Endothelial cell of umbilical vein (primary cell): ENCODE measurements at regions of chr6 and their contacts with region 1.

Region 1: GRCh38 chr6:31827286-31828079 is at the start of gene HSPA1B:
- DNase-seq: peak; percentile 100
- H3K4me3 ChIP-seq: peak within 1 kb of the TSS in 2 of 3 experiments; percentile 41 to 45
- H3K27ac ChIP-seq: peak within 1 kb of the TSS; percentile 56
- H3K4me1 ChIP-seq: peaks cover 17% of the 10 kb centered on the region
- H3K27me3 ChIP-seq: no peaks in the 10 kb centered on the region
- CTCF ChIP-seq: no peak
- POLR2A ChIP-seq: peak; percentile 99
- total RNA-seq, gene HSPA1B: 49.3 and 54.0 TPM in 2 replicates

Region 2: DNA sequence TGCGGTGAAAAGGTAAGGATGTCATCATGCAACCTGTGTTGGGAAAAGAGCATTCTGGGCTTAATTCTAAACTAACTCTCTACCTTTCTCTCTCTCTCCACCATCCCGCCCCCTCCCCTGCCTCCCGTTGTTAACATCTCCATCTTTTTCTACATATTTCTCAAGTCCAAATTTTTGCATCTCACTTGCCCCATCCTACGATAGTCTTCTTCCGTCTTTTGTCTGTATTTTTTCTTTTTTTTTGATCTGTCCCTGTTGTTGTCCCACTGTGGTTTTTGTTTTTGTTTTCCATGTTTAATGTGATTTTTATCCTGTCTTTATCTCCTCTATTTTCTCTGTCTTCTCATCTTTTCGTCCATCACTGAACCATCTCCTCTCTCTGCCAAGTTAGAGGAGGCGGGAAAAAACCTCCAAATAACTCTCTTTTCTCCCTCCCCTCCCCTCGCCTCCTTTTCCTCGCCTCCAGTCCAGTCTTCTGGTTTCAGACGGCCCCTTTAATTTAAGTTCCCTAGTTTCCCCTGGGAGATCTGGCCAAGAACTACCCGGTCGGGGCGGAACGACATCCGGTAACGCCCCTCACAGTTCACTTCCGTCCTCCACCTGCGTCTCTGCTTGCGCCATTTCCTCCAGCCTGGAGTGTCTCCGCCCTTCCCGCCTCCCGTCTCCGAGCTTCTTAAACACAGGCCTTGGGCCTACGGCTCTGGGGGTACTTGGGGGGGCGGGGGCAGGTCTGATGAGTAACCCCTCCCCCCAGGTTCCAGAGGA is 280.3 kb before region 1 on chr6 and contains the start of gene NFKBIL1:
- CTCF ChIA-PET with region 1: interaction called, 7 read pairs
- POLR2A ChIA-PET with region 1: no interaction called
- dilution Hi-C with region 1: no loop called
- intact Hi-C with region 1: loop called (anchors 2 kb)
- DNase-seq: peak; percentile 94
- H3K4me3 ChIP-seq: peak within 1 kb of the TSS; percentile 31 to 55 (median 34)
- H3K27ac ChIP-seq: peak within 1 kb of the TSS; percentile 87
- H3K4me1 ChIP-seq: peaks cover 20% of the 10 kb centered on the region
- H3K27me3 ChIP-seq: no peaks in the 10 kb centered on the region
- CTCF ChIP-seq: no peak
- POLR2A ChIP-seq: peak; percentile 55
- total RNA-seq, gene NFKBIL1: 14.6 and 15.5 TPM in 2 replicates

Region 3: DNA sequence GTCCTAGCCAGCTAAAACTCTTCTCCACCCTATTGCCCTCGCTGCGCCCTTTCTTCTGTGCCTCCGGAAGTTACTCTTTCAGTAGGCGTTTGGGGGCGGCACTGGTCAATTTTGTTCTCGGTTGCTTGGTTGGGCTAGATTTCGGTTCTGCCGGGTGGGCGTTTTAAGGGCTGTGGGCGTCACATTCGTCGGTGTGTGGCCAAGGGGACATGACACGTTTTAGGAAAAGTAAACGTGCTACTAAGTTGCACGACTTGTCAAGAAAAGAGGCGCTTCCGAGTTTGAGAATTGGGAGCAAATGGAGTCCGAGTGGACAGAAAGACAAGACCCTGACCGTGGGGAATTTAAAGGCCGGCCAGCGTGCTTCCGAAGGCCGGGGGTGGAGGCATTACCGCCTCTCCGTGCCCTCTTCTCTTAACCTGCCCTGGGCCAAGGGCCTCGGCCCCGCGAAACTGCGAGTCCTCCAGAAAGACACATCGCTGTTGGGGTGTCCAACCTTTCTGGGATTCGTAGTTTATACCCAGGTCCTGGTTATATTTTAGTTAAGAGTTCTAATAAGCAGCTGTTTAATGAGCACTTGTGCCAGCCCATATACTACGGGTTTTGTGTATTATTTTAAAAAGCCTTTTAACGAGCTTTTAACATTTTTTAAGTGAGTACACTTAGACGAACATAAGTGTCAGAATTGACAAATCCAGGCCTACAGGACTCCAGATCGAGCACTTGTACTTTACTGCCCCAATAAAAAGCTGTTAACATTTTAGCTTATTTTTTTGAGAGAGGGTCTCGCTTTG is 174.4 kb before region 1 on chr6:
- CTCF ChIA-PET with region 1: interaction called, 14 read pairs
- POLR2A ChIA-PET with region 1: no interaction called
- dilution Hi-C with region 1: no loop called
- intact Hi-C with region 1: loop called (anchors 2 kb)
- DNase-seq: no peak
- H3K4me3 ChIP-seq: peak overlapping the region; percentile 23 to 80 (median 62)
- H3K27ac ChIP-seq: peak overlapping the region; percentile 83
- H3K4me1 ChIP-seq: peaks cover 23% of the 10 kb centered on the region
- H3K27me3 ChIP-seq: no peaks in the 10 kb centered on the region
- CTCF ChIP-seq: no peak
- POLR2A ChIP-seq: no peak

Region 4: DNA sequence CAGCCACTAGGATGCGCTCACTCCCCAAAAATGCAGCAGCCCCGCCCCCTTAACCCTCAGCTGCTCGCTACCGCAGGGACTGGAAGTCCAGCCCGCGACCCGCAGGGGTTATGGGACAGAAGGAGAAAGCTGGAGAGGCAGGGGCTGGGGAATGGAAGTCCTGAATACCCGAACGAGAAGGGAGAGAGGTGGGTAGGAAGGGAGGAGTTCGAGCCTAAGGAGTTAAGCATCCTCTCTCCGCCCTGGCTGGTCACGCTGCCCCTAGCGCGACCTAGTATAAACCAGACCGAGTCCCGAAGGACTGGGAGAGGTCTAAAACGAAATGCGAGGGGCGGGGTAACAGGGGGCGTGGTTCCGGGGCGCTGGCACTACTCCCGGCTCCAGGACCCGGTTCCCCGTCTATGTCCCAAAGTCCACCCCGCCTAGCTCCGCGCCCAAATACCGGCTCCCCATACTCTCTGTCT is 97.9 kb before region 1 on chr6:
- CTCF ChIA-PET with region 1: interaction called, 19 read pairs
- POLR2A ChIA-PET with region 1: interaction called, 14 read pairs
- dilution Hi-C with region 1: no loop called
- intact Hi-C with region 1: loop called (anchors 1 kb)
- DNase-seq: peak; percentile 90
- H3K4me3 ChIP-seq: peak overlapping the region; percentile 66 to 94 (median 70)
- H3K27ac ChIP-seq: peak overlapping the region; percentile 54
- H3K4me1 ChIP-seq: peaks cover 37% of the 10 kb centered on the region
- H3K27me3 ChIP-seq: no peaks in the 10 kb centered on the region
- CTCF ChIP-seq: peak in 1 of 2 donors; percentile 73
- POLR2A ChIP-seq: no peak

Region 5: GRCh38 chr6:31776989-31777666 is 50.4 kb before region 1 on chr6 and contains the start of gene VWA7:
- CTCF ChIA-PET with region 1: interaction called, 71 read pairs
- POLR2A ChIA-PET with region 1: interaction called, 7 read pairs
- dilution Hi-C with region 1: no loop called
- intact Hi-C with region 1: loop called (anchors 1 kb)
- DNase-seq: peak; percentile 35
- H3K4me3 ChIP-seq: no peak within 1 kb of the TSS
- H3K27ac ChIP-seq: no peak within 1 kb of the TSS
- H3K4me1 ChIP-seq: peaks cover 4% of the 10 kb centered on the region
- H3K27me3 ChIP-seq: no peaks in the 10 kb centered on the region
- CTCF ChIP-seq: no peak
- POLR2A ChIP-seq: no peak
- total RNA-seq, gene VWA7: 0.25 and 0.51 TPM in 2 replicates

Region 6: DNA sequence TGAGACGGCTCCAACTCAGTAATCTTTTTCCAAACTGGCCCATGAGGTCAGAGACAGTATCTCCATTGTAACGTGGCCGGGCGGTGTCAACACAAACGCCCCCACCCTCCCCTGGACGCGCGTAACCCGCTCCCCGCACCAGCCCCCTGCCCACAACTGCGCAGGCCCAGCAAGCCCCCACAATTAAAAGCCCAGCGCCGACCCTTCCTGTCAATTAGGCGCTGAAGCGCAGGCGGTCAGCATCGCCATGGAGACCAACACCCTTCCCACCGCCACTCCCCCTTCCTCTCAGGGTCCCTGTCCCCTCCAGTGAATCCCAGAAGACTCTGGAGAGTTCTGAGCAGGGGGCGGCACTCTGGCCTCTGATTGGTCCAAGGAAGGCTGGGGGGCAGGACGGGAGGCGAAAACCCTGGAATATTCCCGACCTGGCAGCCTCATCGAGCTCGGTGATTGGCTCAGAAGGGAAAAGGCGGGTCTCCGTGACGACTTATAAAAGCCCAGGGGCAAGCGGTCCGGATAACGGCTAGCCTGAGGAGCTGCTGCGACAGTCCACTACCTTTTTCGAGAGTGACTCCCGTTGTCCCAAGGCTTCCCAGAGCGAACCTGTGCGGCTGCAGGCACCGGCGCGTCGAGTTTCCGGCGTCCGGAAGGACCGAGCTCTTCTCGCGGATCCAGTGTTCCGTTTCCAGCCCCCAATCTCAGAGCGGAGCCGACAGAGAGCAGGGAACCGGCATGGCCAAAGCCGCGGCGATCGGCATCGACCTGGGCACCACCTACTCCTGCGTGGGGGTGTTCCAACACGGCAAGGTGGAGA is 12.3 kb before region 1 on chr6 and contains the starts of genes HSPA1A and HSPA1L:
- CTCF ChIA-PET with region 1: interaction called, 11 read pairs
- POLR2A ChIA-PET with region 1: interaction called, 43 read pairs
- dilution Hi-C with region 1: no loop called
- intact Hi-C with region 1: no loop called
- DNase-seq: peak; percentile 97
- H3K4me3 ChIP-seq: peak within 1 kb of the TSS; percentile 42 to 84 (median 83)
- H3K27ac ChIP-seq: peak within 1 kb of the TSS; percentile 71
- H3K4me1 ChIP-seq: peaks cover 21% of the 10 kb centered on the region
- H3K27me3 ChIP-seq: no peaks in the 10 kb centered on the region
- CTCF ChIP-seq: no peak
- POLR2A ChIP-seq: peak; percentile 99
- total RNA-seq, gene HSPA1A: 55.6 and 58.3 TPM in 2 replicates
- total RNA-seq, gene HSPA1L: 0.74 and 0.77 TPM in 2 replicates

Region 7: GRCh38 chr6:31851485-31851832 is 24.0 kb after region 1 on chr6:
- CTCF ChIA-PET with region 1: no interaction called
- POLR2A ChIA-PET with region 1: no interaction called
- dilution Hi-C with region 1: no loop called
- intact Hi-C with region 1: no loop called
- DNase-seq: no peak
- H3K4me3 ChIP-seq: no peak overlapping the region
- H3K27ac ChIP-seq: no peak overlapping the region
- H3K4me1 ChIP-seq: no peaks in the 10 kb centered on the region
- H3K27me3 ChIP-seq: no peaks in the 10 kb centered on the region
- CTCF ChIP-seq: no peak
- POLR2A ChIP-seq: no peak